K562 (cell line): ENCODE measurements at regions of chr12 and their contacts with region 1.

Region 1: GRCh38 chr12:53321074-53321814 is at the start of gene AAAS:
- DNase-seq: peak; percentile 96 to 99 (median 97)
- ATAC-seq: peak; percentile 90
- H3K4me3 ChIP-seq: peak within 1 kb of the TSS; percentile 75
- H3K27ac ChIP-seq: peak within 1 kb of the TSS; percentile 97
- H3K4me1 ChIP-seq: peaks cover 29 to 42% of the 10 kb centered on the region in 2 experiments
- H3K27me3 ChIP-seq: no peaks in the 10 kb centered on the region
- CTCF ChIP-seq: peak; percentile 87 to 99 (median 95)
- EP300 ChIP-seq: peak; percentile 69
- POLR2A ChIP-seq: peak; percentile 99
- RAD21 ChIP-seq: peak; percentile 60 to 61
- polyA plus RNA-seq, gene AAAS: 124 to 157 TPM

Region 2: DNA sequence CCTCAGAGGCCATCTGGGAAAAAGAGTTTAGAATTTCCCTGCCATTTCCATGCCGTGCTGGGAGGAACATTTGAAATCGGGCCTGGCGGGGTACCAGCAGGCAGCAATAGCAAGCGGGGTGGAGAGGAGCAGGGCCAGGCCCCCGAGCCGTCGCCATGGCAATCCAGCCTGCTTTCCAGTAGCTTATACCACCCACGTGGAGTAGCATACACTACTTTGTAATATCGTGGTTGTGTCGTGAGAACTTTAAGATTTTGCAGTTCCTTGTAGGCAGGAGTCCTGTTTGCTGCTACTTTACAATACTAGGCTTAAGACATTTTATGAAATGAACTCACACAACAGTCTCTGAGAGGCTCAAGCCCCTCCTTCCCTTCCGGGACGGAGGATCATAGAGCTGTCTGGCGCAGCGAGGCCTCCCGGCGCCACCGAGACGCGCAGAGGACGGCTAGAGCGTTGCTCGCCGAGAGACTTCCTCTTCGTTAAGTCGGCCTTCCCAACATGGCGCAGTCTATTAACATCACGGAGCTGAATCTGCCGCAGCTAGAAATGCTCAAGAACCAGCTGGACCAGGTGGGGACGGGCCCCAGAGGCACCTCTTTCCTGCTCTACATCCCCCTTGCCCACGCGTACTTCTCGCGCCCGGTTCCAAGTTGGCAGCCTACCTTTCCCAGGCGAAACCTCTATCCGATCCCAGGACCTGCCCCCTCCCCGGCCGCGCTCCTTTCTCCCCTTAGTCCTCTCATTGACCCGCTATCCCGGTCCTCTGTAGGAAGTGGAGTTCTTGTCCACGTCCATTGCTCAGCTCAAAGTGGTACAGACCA is 26.0 kb before region 1 on chr12 and contains the start of gene PFDN5:
- CTCF ChIA-PET with region 1: no interaction called
- POLR2A ChIA-PET with region 1: interaction called, 16 read pairs
- in situ Hi-C with region 1: no loop called
- intact Hi-C with region 1: loop called (anchors 1 kb)
- DNase-seq: peak; percentile 85 to 96 (median 88)
- ATAC-seq: peak; percentile 99
- H3K4me3 ChIP-seq: peak within 1 kb of the TSS; percentile 70
- H3K27ac ChIP-seq: peak within 1 kb of the TSS; percentile 88
- H3K4me1 ChIP-seq: peaks cover 23 to 28% of the 10 kb centered on the region in 2 experiments; a peak in 4 of 5 replicates
- H3K27me3 ChIP-seq: no peaks in the 10 kb centered on the region
- CTCF ChIP-seq: no peak
- EP300 ChIP-seq: peak; percentile 7; the same call in 1 of the 2 replicates
- POLR2A ChIP-seq: peak; percentile 92
- RAD21 ChIP-seq: peak in 1 of 2 experiments; percentile 17; a peak in 1 of 4 replicates
- polyA plus RNA-seq, gene PFDN5: 1,505 to 1,636 TPM

Region 3: GRCh38 chr12:53333289-53333688 is 12.0 kb after region 1 on chr12:
- CTCF ChIA-PET with region 1: interaction called, 4 read pairs
- POLR2A ChIA-PET with region 1: interaction called, 10 read pairs
- in situ Hi-C with region 1: no loop called
- intact Hi-C with region 1: no loop called
- DNase-seq: no peak
- ATAC-seq: no peak
- H3K4me3 ChIP-seq: no peak overlapping the region
- H3K27ac ChIP-seq: no peak overlapping the region
- H3K4me1 ChIP-seq: peaks cover 11 to 27% of the 10 kb centered on the region in 2 experiments
- H3K27me3 ChIP-seq: no peaks in the 10 kb centered on the region
- CTCF ChIP-seq: no peak
- EP300 ChIP-seq: no peak
- POLR2A ChIP-seq: no peak
- RAD21 ChIP-seq: no peak

Region 4: DNA sequence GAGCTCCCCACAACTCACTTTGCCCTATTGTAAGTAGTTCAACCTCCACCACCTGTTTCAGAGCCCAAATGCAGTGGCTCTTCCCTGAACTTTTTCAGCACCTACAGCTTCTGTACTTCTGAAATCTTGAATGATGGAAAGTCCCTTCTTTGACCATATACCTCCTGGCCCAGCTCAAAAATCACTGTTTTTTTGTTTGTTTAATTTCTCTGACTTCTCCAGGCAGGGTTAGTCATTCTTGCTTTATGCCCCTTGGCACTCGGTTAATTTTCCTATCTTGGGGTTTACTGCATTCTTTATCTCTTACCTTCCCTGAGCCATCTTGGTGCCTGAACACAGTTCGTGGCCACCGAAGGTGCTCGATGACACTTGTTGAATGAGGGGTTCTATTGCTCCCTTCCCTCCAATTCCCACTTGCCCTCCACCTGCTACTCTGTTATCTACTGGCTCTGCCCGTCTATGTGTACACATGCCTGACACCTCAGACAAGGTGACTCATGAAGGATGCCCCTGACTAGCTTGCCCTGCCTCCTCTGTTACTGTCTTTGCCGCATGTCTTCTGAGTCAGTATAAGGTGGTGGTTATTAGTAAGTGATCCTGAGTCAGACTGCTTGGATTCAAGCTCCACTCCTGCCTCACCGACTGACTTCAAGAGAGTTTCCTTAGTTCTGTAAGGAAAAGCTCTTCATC is 106.8 kb after region 1 on chr12:
- CTCF ChIA-PET with region 1: no interaction called
- POLR2A ChIA-PET with region 1: interaction called, 3 read pairs
- in situ Hi-C with region 1: no loop called
- intact Hi-C with region 1: loop called (anchors 10 kb)
- DNase-seq: peak in 2 of 4 experiments; percentile 15 to 38
- ATAC-seq: no peak
- H3K4me3 ChIP-seq: no peak overlapping the region
- H3K27ac ChIP-seq: no peak overlapping the region
- H3K4me1 ChIP-seq: peaks cover 30 to 31% of the 10 kb centered on the region in 2 experiments
- H3K27me3 ChIP-seq: no peaks in the 10 kb centered on the region
- CTCF ChIP-seq: no peak
- EP300 ChIP-seq: no peak
- POLR2A ChIP-seq: no peak
- RAD21 ChIP-seq: no peak

Region 5: GRCh38 chr12:53481957-53482586 is 160.8 kb after region 1 on chr12:
- CTCF ChIA-PET with region 1: no interaction called
- POLR2A ChIA-PET with region 1: no interaction called
- in situ Hi-C with region 1: no loop called
- intact Hi-C with region 1: no loop called
- DNase-seq: peak in 1 of 4 experiments; percentile 37
- ATAC-seq: peak; percentile 61
- H3K4me3 ChIP-seq: no peak overlapping the region
- H3K27ac ChIP-seq: no peak overlapping the region
- H3K4me1 ChIP-seq: peaks cover 0 to 13% of the 10 kb centered on the region in 2 experiments; a peak in 3 of 5 replicates
- H3K27me3 ChIP-seq: no peaks in the 10 kb centered on the region
- CTCF ChIP-seq: peak; percentile 22 to 37 (median 31); a peak in 5 of 6 replicates
- EP300 ChIP-seq: no peak
- POLR2A ChIP-seq: peak; percentile 59
- RAD21 ChIP-seq: no peak

Region 6: DNA sequence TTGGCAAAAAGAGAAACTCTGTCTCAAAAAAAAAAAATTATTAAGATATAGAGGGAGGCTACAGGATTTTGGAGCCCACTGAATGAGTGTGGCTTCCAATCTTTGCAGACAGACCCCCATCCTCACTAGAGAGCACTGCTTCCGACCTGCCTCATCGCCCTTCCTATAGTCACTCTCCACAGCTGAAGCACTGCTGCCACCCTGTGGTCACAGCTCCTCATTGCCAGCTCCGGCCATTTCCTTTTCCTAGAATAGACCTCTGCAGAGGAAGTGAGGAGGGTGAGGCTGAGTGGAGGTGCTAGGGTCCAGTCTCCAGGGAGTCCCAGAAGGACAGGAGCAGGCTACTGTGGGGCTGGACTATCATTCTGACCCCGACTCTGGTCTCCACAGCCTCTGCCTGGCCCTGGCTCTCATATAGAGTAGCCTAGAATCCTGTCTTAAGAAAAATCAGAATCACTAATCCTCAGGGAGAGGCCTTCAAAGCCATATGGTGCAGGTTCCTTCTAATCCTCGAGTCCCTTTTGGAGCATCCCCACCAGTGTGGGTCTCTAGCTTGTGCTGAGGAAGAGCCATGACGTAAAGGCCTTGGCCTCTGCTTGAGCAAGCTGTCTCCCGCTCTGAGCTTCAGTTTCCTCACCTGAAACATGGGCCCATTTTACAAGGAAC is 187.4 kb after region 1 on chr12:
- CTCF ChIA-PET with region 1: interaction called, 20 read pairs
- POLR2A ChIA-PET with region 1: interaction called, 3 read pairs
- in situ Hi-C with region 1: loop called (anchors 10 kb)
- intact Hi-C with region 1: loop called (anchors 1 kb)
- DNase-seq: peak; percentile 72 to 90 (median 82)
- ATAC-seq: peak; percentile 98
- H3K4me3 ChIP-seq: no peak overlapping the region
- H3K27ac ChIP-seq: 0 out of 3 replicates have a peak overlapping the region, but pooled peaks have one; percentile 14
- H3K4me1 ChIP-seq: peaks cover 4 to 7% of the 10 kb centered on the region in 2 experiments; a peak in 4 of 5 replicates
- H3K27me3 ChIP-seq: no peaks in the 10 kb centered on the region; a peak in 1 of 5 replicates
- CTCF ChIP-seq: peak; percentile 94 to 98 (median 95)
- EP300 ChIP-seq: no peak
- POLR2A ChIP-seq: no peak
- RAD21 ChIP-seq: peak; percentile 94 to 96